ENCODE measurements at regions of chr1 and their contacts with region 1.

Region 1: GRCh38 chr1:52867087-52867863 is 24.7 kb downstream of the ZYG11A start:
- DNase-seq: no peak
- H3K4me3 ChIP-seq: no peak overlapping the region
- H3K27ac ChIP-seq: no peak overlapping the region
- H3K4me1 ChIP-seq: peaks cover 0 to 7% (median 0%) of the 10 kb centered on the region in 4 donors
- H3K27me3 ChIP-seq: no peaks in the 10 kb centered on the region
- CTCF ChIP-seq: no peak
- EP300 ChIP-seq: no peak
- POLR2A ChIP-seq: no peak

Region 2: GRCh38 chr1:52674497-52675384 is 192.5 kb before region 1 on chr1:
- in situ Hi-C with region 1: no loop called
- intact Hi-C with region 1: loop called (anchors 5 kb)
- DNase-seq: no peak
- H3K4me3 ChIP-seq: no peak overlapping the region
- H3K27ac ChIP-seq: no peak overlapping the region
- H3K4me1 ChIP-seq: no peaks in the 10 kb centered on the region
- H3K27me3 ChIP-seq: no peaks in the 10 kb centered on the region
- CTCF ChIP-seq: no peak
- EP300 ChIP-seq: no peak
- POLR2A ChIP-seq: no peak

Measured in transverse colon (tissue), 4 donors.